ENCODE measurements at regions of chr3 and their contacts with region 1.

Region 1: GRCh38 chr3:9932843-9933560 is 632 bp upstream of the CRELD1 start:
- DNase-seq: no peak
- H3K4me3 ChIP-seq: peak overlapping the region; percentile 77
- CTCF ChIP-seq: peak; percentile 89

Region 2: DNA sequence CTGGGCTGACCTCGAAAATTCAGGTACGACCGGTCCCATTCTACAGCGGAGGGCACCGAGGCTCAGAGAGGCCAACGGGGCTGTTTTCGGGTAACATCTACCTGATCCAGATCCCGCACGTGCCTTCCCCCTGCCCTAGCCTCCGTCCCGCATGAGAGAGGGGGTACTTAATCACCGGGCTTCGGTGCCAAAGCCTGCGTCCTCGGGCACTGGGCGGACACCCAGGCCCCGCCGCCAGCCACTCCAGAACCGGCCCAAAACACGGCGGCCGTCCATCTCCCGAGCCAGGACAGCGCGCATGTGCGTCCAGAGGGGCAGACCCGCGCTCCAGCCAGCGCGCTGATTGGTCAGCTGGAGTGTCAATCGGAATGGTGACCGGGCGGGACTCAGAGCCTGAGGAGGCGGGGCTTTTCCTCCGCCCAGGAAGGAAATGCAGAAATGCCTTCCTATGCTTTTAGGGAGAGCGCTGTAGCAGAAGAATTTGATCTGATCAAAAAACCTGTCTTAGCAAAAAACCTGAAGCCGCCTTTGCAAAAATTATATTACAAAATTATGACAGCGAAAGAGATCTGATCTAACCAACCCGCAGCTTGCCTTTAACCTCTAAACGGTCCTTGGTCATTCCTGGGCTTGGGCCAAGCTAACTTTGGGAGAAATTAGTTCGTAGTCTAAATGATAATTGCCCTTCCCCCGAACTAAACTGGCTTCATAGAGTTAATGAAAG is 89.1 kb before region 1 on chr3 and contains the start of gene RPUSD3:
- CTCF ChIA-PET with region 1: interaction called, 42 read pairs
- POLR2A ChIA-PET with region 1: interaction called, 3 read pairs
- DNase-seq: peak; percentile 55
- H3K4me3 ChIP-seq: peak within 1 kb of the TSS; percentile 94
- CTCF ChIP-seq: no peak

Region 3: GRCh38 chr3:9902372-9903237 is 30.4 kb before region 1 on chr3 and contains the start of gene IL17RE:
- CTCF ChIA-PET with region 1: interaction called, 10 read pairs
- POLR2A ChIA-PET with region 1: no interaction called
- DNase-seq: no peak
- H3K4me3 ChIP-seq: peak within 1 kb of the TSS; percentile 43
- CTCF ChIP-seq: no peak

Region 4: GRCh38 chr3:9908286-9908685 is 24.7 kb before region 1 on chr3:
- CTCF ChIA-PET with region 1: interaction called, 10 read pairs
- POLR2A ChIA-PET with region 1: interaction called, 3 read pairs
- DNase-seq: no peak
- H3K4me3 ChIP-seq: no peak overlapping the region
- CTCF ChIP-seq: no peak

Region 5: GRCh38 chr3:9915254-9916141 is 17.5 kb before region 1 on chr3:
- CTCF ChIA-PET with region 1: interaction called, 42 read pairs
- POLR2A ChIA-PET with region 1: interaction called, 12 read pairs
- DNase-seq: no peak
- H3K4me3 ChIP-seq: peak overlapping the region; percentile 61
- CTCF ChIP-seq: peak; percentile 65

Region 6: DNA sequence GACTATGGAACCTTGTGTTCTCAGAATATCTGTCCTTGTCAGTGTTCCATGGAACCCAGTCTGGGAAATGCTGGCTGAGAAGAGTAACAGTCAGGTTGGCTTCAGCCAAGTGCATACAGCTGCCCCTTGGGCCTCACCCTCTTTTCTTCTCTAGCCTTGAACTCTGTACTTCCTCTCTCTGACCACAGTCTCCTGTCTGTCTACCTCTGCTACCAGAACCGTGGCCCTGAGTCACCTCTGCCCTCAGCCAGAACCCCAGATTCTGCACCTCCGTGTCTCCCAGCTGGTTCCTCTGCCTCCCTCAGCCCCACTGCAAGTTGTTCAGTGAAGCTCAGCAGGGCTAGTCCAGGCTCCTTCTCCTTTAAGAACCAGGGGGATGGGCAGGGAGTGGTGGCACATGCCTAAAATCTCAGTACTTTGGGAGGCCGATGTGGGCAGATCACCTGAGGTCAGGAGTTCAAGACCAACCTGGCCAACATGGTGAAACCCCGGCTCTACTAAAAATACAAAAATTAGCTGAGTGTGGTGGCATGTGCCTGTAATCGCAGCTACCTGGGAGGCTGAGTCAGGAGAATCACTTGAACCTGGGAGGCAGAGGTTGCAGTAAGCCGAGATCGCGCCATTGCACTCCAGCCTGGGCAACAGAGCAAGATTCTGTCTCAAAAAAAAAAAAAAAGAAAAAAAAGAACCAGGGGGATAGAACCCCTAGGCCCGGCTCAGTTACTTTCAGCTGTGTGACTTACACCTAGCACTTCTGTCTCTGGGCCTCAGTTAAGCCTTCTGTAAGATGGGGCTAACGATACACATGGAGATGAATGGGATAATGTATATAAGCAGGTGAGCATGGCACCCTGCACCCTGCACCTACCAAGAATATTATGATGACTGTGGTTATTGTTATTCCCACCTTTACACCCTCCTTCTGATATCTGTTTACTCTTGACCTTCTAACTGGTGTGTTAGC is 291.0 kb after region 1 on chr3:
- CTCF ChIA-PET with region 1: interaction called, 15 read pairs
- POLR2A ChIA-PET with region 1: no interaction called
- DNase-seq: no peak
- H3K4me3 ChIP-seq: no peak overlapping the region
- CTCF ChIP-seq: no peak